Activated CD8-positive, alpha-beta memory T cell treated with anti-CD3 and anti-CD28 coated beads, Interleukin-2, amount 10 ng/mL, durations not matched to agents 7 days and 5 days (primary cell): ENCODE measurements at regions of chr9 and their contacts with region 1.

Region 1: GRCh38 chr9:26955921-26956859 is at the start of gene IFT74:
- DNase-seq: peak; percentile 97
- ATAC-seq: peak; percentile 98
- H3K4me3 Mint-ChIP-seq: peak within 1 kb of the TSS; percentile 88
- H3K27ac Mint-ChIP-seq: peak within 1 kb of the TSS; percentile 97
- H3K4me1 Mint-ChIP-seq: peaks cover 45% of the 10 kb centered on the region
- H3K27me3 Mint-ChIP-seq: no peaks in the 10 kb centered on the region
- total RNA-seq, gene IFT74: 11.8 to 12.1 TPM

Region 2: GRCh38 chr9:26892251-26893029 is 63.8 kb before region 1 on chr9 and contains the start of gene CAAP1:
- CTCF ChIA-PET with region 1: interaction called, 13 read pairs
- DNase-seq: peak; percentile 95
- ATAC-seq: peak; percentile 95
- H3K4me3 Mint-ChIP-seq: peak within 1 kb of the TSS; percentile 86
- H3K27ac Mint-ChIP-seq: peak within 1 kb of the TSS; percentile 98
- H3K4me1 Mint-ChIP-seq: peaks cover 31% of the 10 kb centered on the region
- H3K27me3 Mint-ChIP-seq: no peaks in the 10 kb centered on the region
- total RNA-seq, gene CAAP1: 18.0 to 18.1 TPM

Region 3: GRCh38 chr9:27003426-27004077 is 47.4 kb after region 1 on chr9:
- CTCF ChIA-PET with region 1: no interaction called
- DNase-seq: no peak
- ATAC-seq: no peak
- H3K4me3 Mint-ChIP-seq: no peak overlapping the region
- H3K27ac Mint-ChIP-seq: no peak overlapping the region
- H3K4me1 Mint-ChIP-seq: no peaks in the 10 kb centered on the region
- H3K27me3 Mint-ChIP-seq: no peaks in the 10 kb centered on the region